ENCODE measurements at regions of chr15 and their contacts with region 1.

Region 1: DNA sequence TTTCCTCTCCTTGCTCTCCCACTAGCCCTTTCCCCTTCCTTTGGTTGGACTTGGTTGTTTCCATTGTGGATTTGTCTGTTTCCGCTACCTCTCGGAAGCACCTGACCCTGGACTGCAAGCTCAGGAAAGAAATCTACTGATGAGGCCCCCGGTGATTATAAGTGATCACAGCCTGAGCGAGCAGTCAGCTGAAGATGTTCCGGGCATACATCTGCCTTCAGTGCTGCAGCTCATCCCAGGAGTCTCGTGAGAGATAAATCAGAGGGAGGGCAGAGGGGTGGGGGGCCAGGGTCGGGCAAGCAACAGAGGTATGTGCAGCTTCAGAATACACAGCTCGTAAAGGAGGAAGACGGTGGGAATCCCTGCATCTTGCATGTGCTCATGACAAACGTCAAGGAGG is 102.1 kb downstream of the MRPL46 start:
- DNase-seq: no peak

Region 2: GRCh38 chr15:88303395-88303794 is 61.7 kb before region 1 on chr15:
- intact Hi-C with region 1: loop called in 1 of 2 experiments (anchors 10 kb)
- DNase-seq: no peak

Region 3: GRCh38 chr15:88546248-88547129 is 181.4 kb after region 1 on chr15 and contains the start of gene DET1:
- intact Hi-C with region 1: loop called in 1 of 2 experiments (anchors 10 kb)
- DNase-seq: peak; percentile 98
- total RNA-seq, gene DET1: 3.1 to 6.4 TPM

Measured in posterior vena cava (tissue), 2 donors.